ENCODE measurements at regions of chr3 and their contacts with region 1.

Region 1: GRCh38 chr3:177197041-177197727 is at the start of gene TBL1XR1:
- DNase-seq: peak; percentile 91 to 98
- H3K4me3 ChIP-seq: peak within 1 kb of the TSS; percentile 85
- CTCF ChIP-seq: no peak
- POLR2A ChIP-seq: no peak
- total RNA-seq, gene TBL1XR1: 51.6 to 91.1 (median 66.0) TPM

Region 2: DNA sequence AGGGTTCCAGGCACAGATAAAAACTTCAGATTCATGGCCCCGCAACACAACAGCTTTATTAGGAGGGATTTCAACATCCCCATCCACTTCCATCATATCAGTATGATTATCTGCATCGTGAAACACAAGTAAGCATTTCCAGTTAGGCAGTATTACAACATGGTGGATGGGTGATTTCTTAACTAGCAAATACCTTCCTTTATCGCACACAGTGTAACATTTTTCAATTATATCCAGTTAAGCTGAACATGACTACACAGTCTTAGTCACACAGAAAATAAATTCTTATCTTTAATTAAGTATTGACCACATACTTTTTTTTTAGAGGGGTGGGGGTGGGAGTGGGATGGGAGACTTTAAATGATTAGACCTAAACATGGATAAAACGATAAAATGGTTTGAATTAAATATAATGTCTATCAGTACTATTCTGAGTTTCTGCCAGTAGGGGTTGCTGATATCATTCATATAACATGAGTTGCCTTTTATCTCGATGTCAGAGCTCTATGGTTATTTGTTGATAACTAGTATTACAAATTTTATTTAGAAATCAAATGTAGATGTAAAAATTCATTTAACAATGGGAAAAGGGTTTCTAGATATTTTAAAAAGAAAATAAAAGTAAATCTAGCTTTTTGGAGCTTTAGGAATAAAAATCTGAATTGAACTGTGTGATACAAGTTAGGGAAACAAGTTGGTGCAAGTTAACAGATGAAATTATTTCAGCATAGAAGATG is 146.5 kb before region 1 on chr3:
- intact Hi-C with region 1: loop called (anchors 10 kb)
- DNase-seq: no peak
- H3K4me3 ChIP-seq: no peak overlapping the region
- CTCF ChIP-seq: no peak
- POLR2A ChIP-seq: no peak

Region 3: DNA sequence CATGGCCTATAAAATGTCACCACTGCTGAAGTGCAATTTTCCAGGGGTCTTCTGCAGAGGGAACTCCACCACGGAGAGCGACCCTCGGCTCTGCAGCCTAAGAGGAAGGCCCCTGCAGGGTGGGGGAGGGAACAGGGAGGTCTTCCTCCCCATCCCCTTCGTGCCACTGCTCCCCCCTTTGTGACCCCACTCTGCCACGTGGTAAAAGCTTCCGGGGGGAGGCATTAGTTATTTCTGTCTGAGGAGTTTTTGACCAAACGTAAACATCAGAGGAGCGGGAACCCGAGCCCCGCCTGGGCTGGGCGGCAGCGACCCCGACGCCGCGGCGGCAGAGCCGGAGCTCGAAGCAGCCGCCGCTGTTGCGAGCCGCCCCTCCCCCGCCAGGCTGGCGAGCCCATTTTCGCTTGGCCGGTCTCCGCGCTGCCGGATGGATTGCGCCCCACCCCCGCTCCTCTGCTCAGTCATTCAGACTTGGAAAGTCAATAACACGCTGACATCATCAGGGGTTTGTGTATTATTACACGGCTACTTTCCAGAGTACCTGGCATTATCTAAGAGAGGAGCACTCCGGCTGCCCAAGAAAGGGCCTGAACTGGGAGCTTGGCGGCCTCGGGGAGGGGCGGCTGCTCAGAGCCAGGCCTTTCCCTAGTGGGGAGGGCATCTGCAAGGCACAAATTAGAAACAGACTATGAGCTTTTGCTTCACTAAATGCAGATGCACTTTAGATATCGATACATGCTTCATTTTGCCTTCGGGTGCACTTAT is 162.6 kb after region 1 on chr3:
- intact Hi-C with region 1: loop called (anchors 1 kb)
- DNase-seq: peak; percentile 94 to 99
- H3K4me3 ChIP-seq: no peak overlapping the region
- CTCF ChIP-seq: peak in 1 of 3 donors; percentile 52
- POLR2A ChIP-seq: no peak

Measured in lower leg skin (tissue), 4 donors.